Tibial artery (tissue), 4 donors: ENCODE measurements at regions of chr1 and their contacts with region 1.

Region 1: DNA sequence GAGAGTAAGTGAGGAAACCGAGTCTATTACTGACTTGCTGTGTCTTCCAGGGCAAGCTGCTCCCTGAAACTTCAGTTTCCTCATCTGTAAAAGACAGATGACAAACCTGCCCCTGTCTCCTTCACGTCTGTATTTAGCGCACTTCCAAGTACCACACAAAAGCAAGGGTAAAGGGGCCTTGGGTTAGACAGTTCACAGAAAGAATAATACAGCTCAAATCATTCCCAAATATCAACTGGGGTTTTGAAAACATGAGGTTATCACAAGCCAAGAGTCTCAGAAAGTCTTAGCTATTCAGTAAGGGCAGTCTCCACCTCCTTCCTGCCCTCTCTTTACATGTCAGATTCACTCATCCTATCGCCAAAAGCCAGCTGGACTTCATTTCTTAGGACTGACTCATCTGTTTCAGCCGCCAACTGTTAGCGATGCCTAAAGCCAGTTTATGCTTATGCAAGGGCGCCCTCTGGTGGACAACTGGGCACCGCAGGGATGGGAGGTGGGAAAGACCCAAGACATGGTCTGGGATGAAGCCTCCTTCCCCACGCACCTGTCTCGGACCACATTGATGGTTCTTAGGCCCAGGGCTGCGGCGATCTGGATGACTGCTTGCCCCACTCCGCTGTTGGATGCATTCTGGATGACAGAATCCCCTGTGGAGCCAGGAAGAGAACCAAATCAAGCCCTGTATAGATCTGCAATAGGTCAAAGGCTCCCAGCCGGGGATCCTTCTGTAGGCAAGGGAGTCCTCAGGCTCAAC is 21.1 kb upstream of the SRSF4 start:
- DNase-seq: peak; percentile 95 to 97
- H3K4me3 ChIP-seq: no peak overlapping the region
- H3K27ac ChIP-seq: peak overlapping the region; percentile 72 to 76
- H3K4me1 ChIP-seq: peaks cover 0 to 11% (median 7%) of the 10 kb centered on the region in 4 donors
- H3K27me3 ChIP-seq: no peaks in the 10 kb centered on the region
- CTCF ChIP-seq: peak; percentile 90 to 98

Region 2: GRCh38 chr1:29033829-29034466 is 168.8 kb before region 1 on chr1:
- intact Hi-C with region 1: loop called (anchors 10 kb)
- DNase-seq: no peak
- H3K4me3 ChIP-seq: no peak overlapping the region
- H3K27ac ChIP-seq: no peak overlapping the region
- H3K4me1 ChIP-seq: no peaks in the 10 kb centered on the region
- H3K27me3 ChIP-seq: no peaks in the 10 kb centered on the region
- CTCF ChIP-seq: peak; percentile 63 to 77